Aorta (tissue), 5 donors: ENCODE measurements at regions of chr2 and their contacts with region 1.

Region 1: DNA sequence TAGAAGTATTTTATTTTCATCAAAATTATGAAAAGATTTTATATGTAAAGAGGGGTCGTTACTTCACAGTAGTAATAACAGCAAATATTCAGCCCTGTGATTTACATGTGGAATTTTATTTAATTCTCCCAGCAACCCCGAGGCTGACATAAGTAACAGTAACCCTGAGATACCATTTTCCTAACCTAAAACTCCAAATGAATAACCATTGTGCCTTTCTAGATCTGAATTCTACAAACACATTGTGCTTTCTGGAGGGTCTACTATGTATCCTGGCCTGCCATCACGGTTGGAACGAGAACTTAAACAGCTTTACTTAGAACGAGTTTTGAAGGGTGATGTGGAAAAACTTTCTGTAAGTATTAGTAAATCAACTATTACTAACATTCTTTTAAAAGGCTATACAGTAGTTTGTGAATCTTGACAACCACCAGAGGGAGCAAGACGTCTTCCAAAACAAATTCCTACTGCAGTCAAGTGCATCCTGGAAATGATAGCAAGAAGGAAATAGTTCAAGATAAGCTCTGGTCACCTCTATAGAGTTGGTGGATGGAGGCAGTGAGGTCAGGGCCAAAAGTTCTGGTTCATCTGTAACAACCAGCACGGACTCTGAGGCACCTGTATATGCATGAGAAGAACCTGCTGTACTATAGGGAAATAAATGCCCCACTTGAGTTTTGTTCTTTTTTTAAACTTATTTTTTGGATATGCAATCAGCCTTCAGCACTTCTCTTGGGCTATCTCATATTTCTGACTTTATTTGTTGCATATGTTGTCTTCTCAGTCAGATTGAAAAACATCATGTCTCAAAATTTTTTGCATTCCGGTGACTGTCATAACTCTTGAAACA is 37.4 kb downstream of the ACTR2 start:
- DNase-seq: no peak
- ATAC-seq: peak; percentile 68
- H3K4me3 ChIP-seq: no peak overlapping the region
- H3K27ac ChIP-seq: no peak overlapping the region
- H3K4me1 ChIP-seq: no peaks in the 10 kb centered on the region
- H3K27me3 ChIP-seq: no peaks in the 10 kb centered on the region

Region 2: GRCh38 chr2:65227425-65228262 is 37.4 kb before region 1 on chr2 and contains the start of gene ACTR2:
- intact Hi-C with region 1: no loop called
- DNase-seq: peak; percentile 98
- ATAC-seq: peak; percentile 99
- H3K4me3 ChIP-seq: peak within 1 kb of the TSS; percentile 90 to 92
- H3K27ac ChIP-seq: peak within 1 kb of the TSS; percentile 86 to 96
- H3K4me1 ChIP-seq: peaks cover 0 to 13% of the 10 kb centered on the region in 2 donors
- H3K27me3 ChIP-seq: no peaks in the 10 kb centered on the region
- total RNA-seq, gene ACTR2: 221 to 255 TPM

Region 3: GRCh38 chr2:65554765-65555591 is 289.9 kb after region 1 on chr2:
- intact Hi-C with region 1: loop called (anchors 2 kb)
- DNase-seq: no peak
- ATAC-seq: no peak
- H3K4me3 ChIP-seq: no peak overlapping the region
- H3K27ac ChIP-seq: no peak overlapping the region
- H3K4me1 ChIP-seq: no peaks in the 10 kb centered on the region
- H3K27me3 ChIP-seq: no peaks in the 10 kb centered on the region